Naive thymus-derived CD4-positive, alpha-beta T cell (primary cell): ENCODE measurements at regions of chr12 and their contacts with region 1.

Region 1: GRCh38 chr12:92408072-92408900 is 262.6 kb upstream of the BTG1 start:
- DNase-seq: peak in 3 of 9 donors; percentile 29 to 40 (median 30)
- ATAC-seq: peak; percentile 34
- H3K4me3 ChIP-seq: no peak overlapping the region
- H3K4me3 Mint-ChIP-seq: peak overlapping the region in 4 of 10 donors; percentile 18 to 58 (median 28)
- H3K27ac ChIP-seq: no peak overlapping the region
- H3K27ac Mint-ChIP-seq: peak overlapping the region in 8 of 9 donors; percentile 30 to 89 (median 72)
- H3K4me1 ChIP-seq: peaks cover 30 to 33% of the 10 kb centered on the region in 2 donors
- H3K4me1 Mint-ChIP-seq: peaks cover 21 to 80% (median 67%) of the 10 kb centered on the region in 7 donors
- H3K27me3 ChIP-seq: no peaks in the 10 kb centered on the region
- H3K27me3 Mint-ChIP-seq: no peaks in the 10 kb centered on the region

Region 2: DNA sequence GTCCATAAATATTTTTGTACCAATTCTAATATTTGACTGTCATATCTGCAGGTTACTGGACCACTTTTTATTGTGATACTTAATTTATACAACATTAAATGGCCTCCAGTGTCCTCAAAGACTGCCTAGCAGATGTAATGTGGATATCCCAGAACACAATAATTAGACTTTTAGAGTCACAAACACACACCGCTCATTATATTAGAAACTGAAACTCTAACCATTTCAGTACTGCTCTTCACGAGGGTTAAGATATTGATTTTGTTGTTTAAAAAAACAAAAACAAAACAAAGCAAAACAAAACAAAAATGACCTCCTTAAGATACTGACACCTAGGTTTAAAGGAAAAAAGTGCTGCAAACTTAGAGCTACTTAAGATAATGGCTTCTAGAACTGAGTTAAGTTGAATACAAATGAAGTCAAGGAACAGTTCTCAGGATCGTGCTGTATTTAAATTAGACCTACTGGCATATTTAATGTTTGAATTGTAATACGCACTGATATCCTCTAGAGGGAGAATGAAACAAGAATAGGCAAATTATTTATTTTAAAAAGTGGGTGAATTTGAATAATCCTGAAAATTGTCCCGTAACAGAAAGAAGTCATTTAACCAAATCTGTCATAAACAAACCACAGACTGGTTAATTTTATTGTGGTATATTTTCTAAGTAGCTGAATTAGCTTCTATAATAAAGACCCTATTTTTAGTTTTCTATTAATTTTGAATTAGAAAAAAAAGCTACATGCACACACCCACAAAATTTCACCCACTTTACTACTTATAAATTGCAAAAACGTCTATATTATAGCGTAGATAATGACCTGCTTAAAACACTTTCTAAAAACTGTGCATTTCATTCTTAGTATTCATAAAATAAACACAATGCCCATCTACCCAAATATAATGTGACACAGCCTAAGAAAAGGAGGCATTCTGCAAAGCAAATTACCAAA is 830.4 kb before region 1 on chr12:
- CTCF ChIA-PET with region 1: interaction called, 3 read pairs
- POLR2A ChIA-PET with region 1: no interaction called
- intact Hi-C with region 1: loop called in 1 of 2 experiments (anchors 5 kb)
- DNase-seq: peak in 6 of 9 donors; percentile 30 to 53 (median 39)
- ATAC-seq: peak; percentile 88
- H3K4me3 ChIP-seq: peak overlapping the region; percentile 39
- H3K4me3 Mint-ChIP-seq: peak overlapping the region; percentile 16 to 93 (median 84)
- H3K27ac ChIP-seq: no peak overlapping the region
- H3K27ac Mint-ChIP-seq: peak overlapping the region; percentile 14 to 94 (median 81)
- H3K4me1 ChIP-seq: peaks cover 0 to 5% of the 10 kb centered on the region in 2 donors
- H3K4me1 Mint-ChIP-seq: peaks cover 12 to 36% (median 19%) of the 10 kb centered on the region in 7 donors
- H3K27me3 ChIP-seq: no peaks in the 10 kb centered on the region
- H3K27me3 Mint-ChIP-seq: peaks cover 0 to 3% (median 0%) of the 10 kb centered on the region in 5 donors

Region 3: DNA sequence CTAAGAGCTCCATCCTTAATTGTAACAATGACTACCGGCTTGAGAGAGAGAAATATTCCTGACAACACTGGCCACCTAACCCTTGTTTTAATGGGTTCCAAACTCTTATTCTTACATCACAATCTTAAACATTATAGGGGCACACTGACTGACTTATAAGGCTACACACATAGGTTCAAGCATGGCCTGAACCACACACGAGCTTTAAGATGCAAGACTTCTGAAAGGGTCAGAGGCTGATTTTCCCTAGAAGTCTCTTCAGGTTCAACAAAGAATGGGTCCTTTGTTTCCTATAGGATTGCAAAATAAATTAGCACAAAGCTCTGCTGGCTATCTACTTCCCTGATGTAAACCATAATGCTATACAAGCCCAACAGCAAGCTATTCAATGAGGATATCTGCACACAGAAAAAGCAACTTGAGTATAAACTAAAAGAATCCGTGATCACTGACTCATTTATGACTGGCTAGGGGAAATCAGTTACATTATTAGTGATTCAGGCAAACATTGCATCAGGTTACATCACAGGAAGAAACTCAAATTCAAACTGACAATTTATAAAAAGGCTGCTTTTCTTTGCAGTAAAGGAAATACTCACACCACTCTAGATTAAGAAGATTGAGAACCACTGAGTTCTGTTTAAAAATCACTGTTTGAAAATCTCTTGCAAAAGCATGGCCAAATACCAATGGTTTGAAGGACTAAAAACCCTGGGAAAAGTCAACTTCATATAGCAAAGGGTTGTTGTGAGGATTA is 271.1 kb before region 1 on chr12:
- CTCF ChIA-PET with region 1: no interaction called
- POLR2A ChIA-PET with region 1: interaction called, 211 read pairs
- intact Hi-C with region 1: no loop called
- DNase-seq: peak in 2 of 9 donors; percentile 34 to 40
- ATAC-seq: peak; percentile 12
- H3K4me3 ChIP-seq: peak overlapping the region; percentile 98
- H3K4me3 Mint-ChIP-seq: peak overlapping the region; percentile 94 to 100 (median 98)
- H3K27ac ChIP-seq: peak overlapping the region; percentile 91
- H3K27ac Mint-ChIP-seq: peak overlapping the region; percentile 91 to 100 (median 98)
- H3K4me1 ChIP-seq: peaks cover 34 to 39% of the 10 kb centered on the region in 2 donors
- H3K4me1 Mint-ChIP-seq: peaks cover 46 to 74% (median 51%) of the 10 kb centered on the region in 7 donors
- H3K27me3 ChIP-seq: no peaks in the 10 kb centered on the region
- H3K27me3 Mint-ChIP-seq: no peaks in the 10 kb centered on the region

Region 4: GRCh38 chr12:92363295-92364146 is 44.8 kb before region 1 on chr12:
- CTCF ChIA-PET with region 1: interaction called, 6 read pairs
- POLR2A ChIA-PET with region 1: interaction called, 57 read pairs
- intact Hi-C with region 1: loop called in 1 of 2 experiments (anchors 1 kb)
- DNase-seq: peak in 8 of 9 donors; percentile 23 to 75 (median 62)
- ATAC-seq: peak; percentile 65
- H3K4me3 ChIP-seq: peak overlapping the region; percentile 49
- H3K4me3 Mint-ChIP-seq: peak overlapping the region; percentile 68 to 90 (median 80)
- H3K27ac ChIP-seq: peak overlapping the region; percentile 69
- H3K27ac Mint-ChIP-seq: peak overlapping the region; percentile 92 to 99 (median 97)
- H3K4me1 ChIP-seq: peaks cover 35 to 67% of the 10 kb centered on the region in 2 donors
- H3K4me1 Mint-ChIP-seq: peaks cover 33 to 88% (median 76%) of the 10 kb centered on the region in 7 donors
- H3K27me3 ChIP-seq: no peaks in the 10 kb centered on the region
- H3K27me3 Mint-ChIP-seq: no peaks in the 10 kb centered on the region

Region 5: GRCh38 chr12:92424338-92424737 is 16.1 kb after region 1 on chr12:
- CTCF ChIA-PET with region 1: interaction called, 3 read pairs
- POLR2A ChIA-PET with region 1: interaction called, 3 read pairs
- intact Hi-C with region 1: loop called in 1 of 2 experiments (anchors 2 kb)
- DNase-seq: no peak
- ATAC-seq: no peak
- H3K4me3 ChIP-seq: no peak overlapping the region
- H3K4me3 Mint-ChIP-seq: no peak overlapping the region
- H3K27ac ChIP-seq: no peak overlapping the region
- H3K27ac Mint-ChIP-seq: peak overlapping the region in 2 of 9 donors; percentile 7 to 55
- H3K4me1 ChIP-seq: peaks cover 0 to 4% of the 10 kb centered on the region in 2 donors
- H3K4me1 Mint-ChIP-seq: peaks cover 16 to 60% (median 39%) of the 10 kb centered on the region in 7 donors
- H3K27me3 ChIP-seq: no peaks in the 10 kb centered on the region
- H3K27me3 Mint-ChIP-seq: no peaks in the 10 kb centered on the region

Region 6: GRCh38 chr12:92593734-92594402 is 185.6 kb after region 1 on chr12:
- CTCF ChIA-PET with region 1: no interaction called
- POLR2A ChIA-PET with region 1: no interaction called
- intact Hi-C with region 1: loop called in 1 of 2 experiments (anchors 1 kb)
- DNase-seq: peak; percentile 51 to 97 (median 92)
- ATAC-seq: peak; percentile 95
- H3K4me3 ChIP-seq: peak overlapping the region; percentile 16
- H3K4me3 Mint-ChIP-seq: peak overlapping the region; percentile 22 to 83 (median 72)
- H3K27ac ChIP-seq: peak overlapping the region; percentile 86
- H3K27ac Mint-ChIP-seq: peak overlapping the region; percentile 90 to 100 (median 98)
- H3K4me1 ChIP-seq: peaks cover 27 to 30% of the 10 kb centered on the region in 2 donors
- H3K4me1 Mint-ChIP-seq: peaks cover 23 to 74% (median 44%) of the 10 kb centered on the region in 7 donors
- H3K27me3 ChIP-seq: no peaks in the 10 kb centered on the region
- H3K27me3 Mint-ChIP-seq: no peaks in the 10 kb centered on the region